Left colon (tissue), 2 donors: ENCODE measurements at regions of chr12 and their contacts with region 1.

Region 1: GRCh38 chr12:47032644-47033043 is 46.8 kb upstream of the PCED1B start:
- DNase-seq: no peak
- ATAC-seq: peak; percentile 61

Region 2: GRCh38 chr12:46617167-46617566 is 415.5 kb before region 1 on chr12:
- intact Hi-C with region 1: no loop called
- DNase-seq: no peak
- ATAC-seq: no peak

Region 3: DNA sequence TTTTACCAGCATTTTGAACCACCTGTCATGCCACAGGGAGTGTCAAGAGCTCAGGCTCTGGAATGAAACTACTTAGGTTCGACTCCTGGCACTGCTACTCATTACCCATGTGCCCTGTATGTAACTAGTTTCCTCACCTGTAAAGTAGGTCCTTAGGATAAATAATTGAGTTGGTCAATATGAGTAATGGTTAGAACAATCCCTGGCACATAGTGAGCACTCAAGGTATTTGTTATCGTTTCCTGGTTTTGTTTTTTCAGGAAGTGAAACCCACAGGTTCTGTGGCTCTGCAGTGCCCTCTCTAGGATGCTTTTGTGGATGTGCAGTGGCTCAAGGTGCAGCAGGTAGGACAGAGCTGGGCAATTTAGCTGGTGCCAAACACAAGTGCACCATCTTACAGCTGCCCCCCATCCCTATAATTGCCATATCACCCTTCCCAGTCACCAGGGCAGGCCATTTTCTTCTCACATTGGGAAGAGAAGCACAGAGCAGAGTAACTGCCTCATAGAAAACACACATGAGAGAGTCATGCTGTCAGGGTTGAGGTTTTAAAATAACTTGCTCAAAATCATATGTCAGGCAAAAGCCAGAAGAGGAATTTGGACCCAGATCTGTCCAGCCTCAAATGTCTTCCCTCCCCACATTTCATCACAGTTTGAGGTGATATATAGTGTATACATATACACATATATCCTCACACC is 375.7 kb after region 1 on chr12:
- intact Hi-C with region 1: loop called in 1 of 2 experiments (anchors 10 kb)
- DNase-seq: no peak
- ATAC-seq: peak; percentile 55

Region 4: DNA sequence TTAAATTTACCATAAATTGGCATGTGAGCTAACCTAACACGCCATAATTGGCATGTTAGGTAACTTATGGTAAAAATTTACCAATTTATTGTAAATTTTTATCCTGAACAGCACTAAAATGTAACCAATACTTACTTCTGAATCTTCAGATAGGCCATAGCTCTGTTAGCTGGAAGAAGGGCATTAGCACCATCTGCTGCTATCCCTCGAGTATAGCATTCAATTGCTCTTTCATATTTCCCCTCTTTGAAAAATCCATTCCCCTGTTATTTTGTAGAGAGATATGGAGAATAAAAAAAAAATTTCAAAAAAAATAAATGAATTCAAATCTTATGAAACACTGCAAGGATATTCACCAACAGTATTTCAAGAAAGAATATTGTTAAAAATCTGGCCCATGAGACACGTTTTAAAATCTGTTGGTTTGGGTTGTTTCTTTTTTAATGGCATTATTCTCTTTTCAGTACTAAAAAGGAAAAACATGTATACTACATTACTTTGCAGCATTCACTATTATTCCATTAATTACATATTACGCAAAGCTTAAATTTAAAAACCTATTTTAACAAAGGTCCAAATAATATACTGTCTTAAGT is 654.1 kb after region 1 on chr12:
- intact Hi-C with region 1: loop called in 1 of 2 experiments (anchors 5 kb)
- DNase-seq: no peak
- ATAC-seq: peak; percentile 49